ENCODE measurements at regions of chr5 and their contacts with region 1.

Region 1: DNA sequence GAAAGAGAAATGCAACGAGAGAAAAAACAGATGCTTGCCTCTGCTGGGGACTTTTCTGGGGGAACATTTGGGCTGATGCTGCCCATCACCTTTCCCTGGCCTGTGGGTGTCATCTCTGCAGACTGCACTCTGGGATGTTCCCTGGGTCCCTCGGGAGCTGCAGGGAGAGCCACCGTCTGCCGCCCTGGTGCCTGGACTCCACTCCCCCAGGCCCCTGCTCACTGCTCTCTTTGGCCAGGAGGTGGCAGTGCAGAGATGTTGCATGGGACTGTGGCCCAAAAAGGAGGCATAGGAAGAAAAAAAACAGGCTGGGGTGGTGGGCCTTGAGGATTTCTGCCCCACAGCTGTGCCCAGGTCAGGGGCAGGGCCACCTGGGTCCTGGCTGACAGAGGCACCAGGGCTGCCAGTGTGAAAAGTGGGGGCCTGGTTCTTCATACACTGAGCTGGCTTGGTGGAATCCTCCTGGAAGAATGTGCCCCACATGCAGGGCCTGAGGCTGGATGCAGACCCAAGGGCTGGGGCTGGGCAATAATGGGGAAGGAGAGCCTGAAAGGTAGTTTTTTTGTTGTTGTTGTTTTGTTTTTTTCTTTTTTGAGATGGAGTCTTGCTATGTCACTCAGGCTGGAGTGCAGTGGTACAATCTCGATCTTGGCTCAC is 353.6 kb downstream of the SLIT3 start:
- DNase-seq: no peak
- H3K4me3 ChIP-seq: no peak overlapping the region
- H3K27me3 ChIP-seq: no peaks in the 10 kb centered on the region
- CTCF ChIP-seq: peak; percentile 91

Region 2: GRCh38 chr5:168935183-168935582 is 12.2 kb before region 1 on chr5:
- CTCF ChIA-PET with region 1: interaction called, 16 read pairs
- POLR2A ChIA-PET with region 1: interaction called, 3 read pairs
- DNase-seq: no peak
- H3K4me3 ChIP-seq: no peak overlapping the region
- H3K27me3 ChIP-seq: no peaks in the 10 kb centered on the region
- CTCF ChIP-seq: no peak